AG04450 (cell line): ENCODE measurements at regions of chr16 and their contacts with region 1.

Region 1: GRCh38 chr16:47037746-47038458 is 64.4 kb upstream of the DNAJA2 start:
- DNase-seq: peak; percentile 44
- H3K4me3 ChIP-seq: peak overlapping the region; percentile 66
- H3K27ac ChIP-seq: no peak overlapping the region
- H3K27me3 ChIP-seq: peaks cover 11% of the 10 kb centered on the region
- CTCF ChIP-seq: peak; percentile 88

Region 2: GRCh38 chr16:47109361-47109760 is 71.5 kb after region 1 on chr16:
- CTCF ChIA-PET with region 1: interaction called, 11 read pairs
- POLR2A ChIA-PET with region 1: no interaction called
- DNase-seq: no peak
- H3K4me3 ChIP-seq: no peak overlapping the region
- H3K27ac ChIP-seq: no peak overlapping the region
- H3K27me3 ChIP-seq: no peaks in the 10 kb centered on the region
- CTCF ChIP-seq: no peak